Calu3 (cell line): ENCODE measurements at regions of chr13 and their contacts with region 1.

Region 1: DNA sequence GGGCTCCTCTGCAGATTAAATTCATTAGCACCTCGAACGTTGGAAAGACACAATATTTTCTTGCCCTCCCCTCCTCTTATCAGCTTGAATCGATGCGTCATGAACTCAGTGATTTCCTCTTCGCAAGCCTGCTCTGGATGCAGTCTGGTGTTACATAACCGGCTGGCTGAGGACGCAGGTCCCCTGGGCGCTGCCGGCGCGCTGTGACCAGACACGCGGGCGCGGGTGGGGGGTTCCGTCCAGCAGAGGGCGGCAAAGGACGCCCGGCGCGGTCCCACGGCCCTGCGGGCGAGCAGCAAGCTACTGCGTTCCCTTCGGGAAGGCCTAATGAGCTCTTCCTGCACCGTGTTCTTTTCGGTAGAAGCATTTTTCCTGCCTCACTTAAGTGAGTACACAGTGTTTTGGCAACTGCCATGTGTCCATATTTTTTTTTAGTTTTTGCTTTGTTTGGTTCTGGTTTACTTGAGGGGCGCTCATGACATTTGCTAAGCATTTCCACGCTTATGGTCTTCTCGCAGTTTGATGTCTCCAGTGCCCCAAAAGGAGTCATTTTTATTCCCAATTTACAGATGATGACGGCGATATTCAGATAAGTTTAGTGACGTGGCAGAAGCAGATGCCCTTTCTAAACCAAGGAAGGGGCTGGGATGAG is 112.2 kb upstream of the MBNL2 start:
- DNase-seq: peak; percentile 85
- H3K4me3 Mint-ChIP-seq: peak overlapping the region; percentile 61
- H3K27ac Mint-ChIP-seq: peak overlapping the region; percentile 82
- H3K4me1 Mint-ChIP-seq: peaks cover 46% of the 10 kb centered on the region
- H3K27me3 Mint-ChIP-seq: no peaks in the 10 kb centered on the region
- CTCF ChIP-seq: peak; percentile 55

Region 2: GRCh38 chr13:97141564-97142005 is 31.6 kb after region 1 on chr13:
- CTCF ChIA-PET with region 1: interaction called, 10 read pairs
- intact Hi-C with region 1: no loop called
- DNase-seq: peak; percentile 56
- H3K4me3 Mint-ChIP-seq: peak overlapping the region; percentile 75
- H3K27ac Mint-ChIP-seq: peak overlapping the region; percentile 96
- H3K4me1 Mint-ChIP-seq: peaks cover 34% of the 10 kb centered on the region
- H3K27me3 Mint-ChIP-seq: no peaks in the 10 kb centered on the region
- CTCF ChIP-seq: no peak

Region 3: DNA sequence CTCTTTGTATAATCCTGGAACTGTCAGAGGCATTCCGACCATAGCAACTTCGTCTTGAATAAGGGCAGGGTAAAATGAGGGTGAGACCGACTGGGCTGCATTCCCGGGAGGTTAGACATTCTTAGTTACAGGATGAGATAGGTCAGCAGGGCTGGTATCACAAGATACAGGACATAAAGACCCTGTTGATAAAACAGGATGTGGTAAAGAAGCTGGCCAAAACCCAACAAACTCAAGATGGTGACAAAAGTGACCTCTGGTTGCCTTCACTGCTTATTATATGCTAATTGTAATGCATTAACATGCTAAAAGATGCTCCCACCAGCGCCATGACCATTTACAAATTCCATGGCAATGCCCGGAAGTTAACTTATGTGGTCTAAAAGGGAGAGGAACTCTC is 84.5 kb after region 1 on chr13:
- CTCF ChIA-PET with region 1: interaction called, 3 read pairs
- intact Hi-C with region 1: loop called (anchors 5 kb)
- DNase-seq: peak; percentile 54
- H3K4me3 Mint-ChIP-seq: no peak overlapping the region
- H3K27ac Mint-ChIP-seq: peak overlapping the region; percentile 97
- H3K4me1 Mint-ChIP-seq: peaks cover 50% of the 10 kb centered on the region
- H3K27me3 Mint-ChIP-seq: no peaks in the 10 kb centered on the region
- CTCF ChIP-seq: no peak

Region 4: GRCh38 chr13:97212601-97213040 is 102.7 kb after region 1 on chr13:
- CTCF ChIA-PET with region 1: interaction called, 21 read pairs
- intact Hi-C with region 1: loop called (anchors 2 kb)
- DNase-seq: no peak
- H3K4me3 Mint-ChIP-seq: no peak overlapping the region
- H3K27ac Mint-ChIP-seq: peak overlapping the region; percentile 78
- H3K4me1 Mint-ChIP-seq: peaks cover 26% of the 10 kb centered on the region
- H3K27me3 Mint-ChIP-seq: no peaks in the 10 kb centered on the region
- CTCF ChIP-seq: no peak